MCF 10A (cell line): ENCODE measurements at regions of chr1 and their contacts with region 1.

Region 1: DNA sequence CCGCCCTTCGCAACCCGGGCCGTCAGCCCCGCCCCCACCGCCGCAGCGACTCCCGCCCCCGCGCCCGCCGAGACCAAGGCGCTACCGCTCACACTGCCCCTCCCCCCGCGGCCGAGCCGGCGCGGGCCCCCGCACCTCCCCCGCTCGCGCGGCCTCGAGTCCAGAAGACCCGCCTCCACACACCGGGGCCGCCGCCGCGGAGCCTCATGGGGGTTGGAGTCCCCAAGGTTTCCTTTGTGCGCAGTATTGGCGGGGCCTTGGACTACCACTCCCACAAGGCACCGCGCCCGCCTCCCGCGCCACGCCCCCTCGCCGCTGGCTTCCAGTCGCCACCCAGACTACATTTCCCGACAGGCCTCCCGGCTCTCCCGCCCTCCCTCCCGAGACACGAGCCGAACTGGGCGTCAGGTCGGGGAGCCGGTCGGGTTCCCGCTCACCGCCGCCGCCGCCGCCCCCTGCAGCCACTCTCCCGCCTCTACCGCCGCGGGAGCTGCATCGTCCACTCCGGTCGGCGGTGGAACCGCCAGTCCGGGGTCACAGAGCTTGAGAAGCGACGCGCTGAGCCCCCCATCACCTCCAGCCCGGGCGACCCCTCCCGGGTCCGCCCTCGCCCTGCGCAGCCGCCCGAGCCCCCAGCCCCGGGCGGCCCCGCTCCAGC is at the start of gene PHF13:
- DNase-seq: peak; percentile 99
- H3K4me3 Mint-ChIP-seq: peak within 1 kb of the TSS; percentile 86
- H3K27ac Mint-ChIP-seq: peak within 1 kb of the TSS; percentile 60
- H3K4me1 Mint-ChIP-seq: peaks cover 6% of the 10 kb centered on the region
- H3K27me3 Mint-ChIP-seq: no peaks in the 10 kb centered on the region
- CTCF ChIP-seq: no peak
- total RNA-seq, gene PHF13: 10.3 and 12.7 TPM in 2 replicates

Region 2: DNA sequence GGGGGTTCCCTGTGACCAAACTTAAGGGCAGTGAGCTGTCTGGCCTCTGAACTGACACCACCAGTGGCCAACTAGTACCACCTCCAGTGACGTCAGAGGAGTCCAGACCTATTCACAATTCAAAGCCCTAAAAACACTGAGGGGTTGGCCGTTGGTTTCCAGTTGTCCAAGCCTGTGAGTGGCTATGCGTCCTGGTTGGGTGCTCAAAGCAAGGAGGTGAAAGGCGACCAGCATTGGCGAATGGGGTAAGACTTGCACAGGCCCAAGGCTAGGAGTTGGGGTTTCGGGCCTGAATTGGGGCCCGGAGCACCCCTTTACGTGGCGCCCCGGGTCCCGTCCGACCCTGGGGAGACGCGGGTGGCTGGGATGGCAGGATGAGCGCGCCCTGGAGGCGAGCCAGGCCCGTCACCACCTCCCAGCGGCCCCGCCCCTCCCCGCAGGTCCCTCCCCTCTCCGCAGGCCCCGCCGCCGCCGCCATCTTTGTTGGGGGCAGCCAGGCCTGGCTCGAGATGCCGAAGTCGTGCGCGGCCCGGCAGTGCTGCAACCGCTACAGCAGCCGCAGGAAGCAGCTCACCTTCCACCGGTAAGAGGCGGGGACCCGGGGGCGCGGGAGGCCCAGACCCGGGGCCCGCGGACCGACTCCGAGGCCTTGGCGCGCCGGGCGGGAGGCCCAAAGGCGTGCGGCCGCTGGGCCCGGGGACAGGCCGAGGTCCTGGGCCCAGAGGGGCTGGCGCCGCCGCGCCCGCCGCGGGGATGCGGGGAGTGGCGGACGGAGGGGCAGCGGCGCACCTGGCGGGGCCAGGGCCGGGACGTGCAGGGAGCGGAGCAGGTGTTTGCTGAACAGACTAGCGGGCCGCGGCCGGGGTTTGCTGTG is 11.5 kb after region 1 on chr1 and contains the start of gene THAP3:
- CTCF ChIA-PET with region 1: interaction called, 5 read pairs
- POLR2A ChIA-PET with region 1: interaction called, 13 read pairs
- intact Hi-C with region 1: no loop called
- DNase-seq: peak; percentile 82
- H3K4me3 Mint-ChIP-seq: peak within 1 kb of the TSS; percentile 84
- H3K27ac Mint-ChIP-seq: peak within 1 kb of the TSS; percentile 82
- H3K4me1 Mint-ChIP-seq: peaks cover 8% of the 10 kb centered on the region
- H3K27me3 Mint-ChIP-seq: no peaks in the 10 kb centered on the region
- CTCF ChIP-seq: no peak
- total RNA-seq, gene THAP3: 14.7 and 18.9 TPM in 2 replicates